AG04450 (cell line): ENCODE measurements at regions of chr2 and their contacts with region 1.

Region 1: GRCh38 chr2:223970343-223971128 is 13.3 kb downstream of the MRPL44 start:
- DNase-seq: no peak
- H3K4me3 ChIP-seq: no peak overlapping the region
- H3K27ac ChIP-seq: no peak overlapping the region
- H3K27me3 ChIP-seq: no peaks in the 10 kb centered on the region
- CTCF ChIP-seq: peak; percentile 93

Region 2: DNA sequence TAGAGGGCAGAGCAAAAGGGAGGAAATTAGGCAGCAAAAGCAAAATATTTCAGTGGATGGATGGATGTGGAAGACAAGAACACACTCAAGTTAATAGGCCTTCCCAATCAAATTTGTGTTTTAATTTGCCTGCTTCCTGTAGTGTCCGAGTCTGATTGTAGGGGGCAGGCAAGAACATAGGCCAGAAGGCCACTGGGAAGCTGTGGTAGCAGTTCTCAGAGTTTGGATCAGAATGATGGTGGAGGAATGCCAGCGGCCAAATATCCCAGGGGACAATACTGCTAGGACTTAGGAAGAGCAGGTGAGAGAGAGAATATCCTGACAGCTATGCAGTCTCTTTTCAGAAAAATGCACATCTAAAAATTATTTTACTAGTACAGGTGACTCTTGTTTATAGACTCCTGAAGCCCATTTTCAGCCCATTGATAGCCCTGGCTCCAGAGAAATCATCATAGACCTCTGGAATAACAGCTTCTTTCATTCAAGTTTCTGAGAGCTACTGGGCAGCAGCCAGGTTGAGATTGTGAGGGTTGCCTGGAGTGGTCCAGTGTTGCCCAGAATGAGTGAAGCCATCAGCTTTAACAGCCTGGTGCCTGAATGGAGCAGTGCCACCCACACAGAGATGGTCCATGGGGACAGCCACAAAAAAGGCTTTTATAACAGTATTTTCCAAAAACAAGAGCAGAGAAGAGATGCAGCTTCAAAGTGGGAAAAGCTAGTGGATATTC is 87.7 kb after region 1 on chr2:
- CTCF ChIA-PET with region 1: no interaction called
- POLR2A ChIA-PET with region 1: no interaction called
- DNase-seq: no peak
- H3K4me3 ChIP-seq: no peak overlapping the region
- H3K27ac ChIP-seq: no peak overlapping the region
- H3K27me3 ChIP-seq: no peaks in the 10 kb centered on the region
- CTCF ChIP-seq: no peak; the same call in 1 of the 2 replicates

Region 3: DNA sequence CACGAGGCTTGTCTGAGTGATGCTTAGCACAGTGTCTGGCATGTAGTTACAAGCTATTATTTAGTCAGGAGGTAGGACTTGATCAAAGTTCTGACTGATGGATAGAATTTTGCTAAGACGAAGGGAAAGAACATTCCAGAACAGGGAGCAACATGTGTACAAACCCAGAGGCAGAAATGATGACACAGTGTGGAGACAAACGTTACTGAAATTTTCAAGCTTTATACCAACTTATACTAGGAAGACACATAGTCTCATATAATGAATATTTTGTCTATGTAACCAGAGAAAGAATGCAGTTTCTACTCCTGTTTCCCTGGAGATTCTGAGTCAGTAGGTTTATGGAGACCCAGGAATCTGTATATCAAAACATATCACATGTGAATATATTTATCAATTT is 308.0 kb after region 1 on chr2:
- CTCF ChIA-PET with region 1: interaction called, 309 read pairs
- POLR2A ChIA-PET with region 1: no interaction called
- DNase-seq: no peak
- H3K4me3 ChIP-seq: no peak overlapping the region
- H3K27ac ChIP-seq: no peak overlapping the region
- H3K27me3 ChIP-seq: no peaks in the 10 kb centered on the region
- CTCF ChIP-seq: no peak

Region 4: DNA sequence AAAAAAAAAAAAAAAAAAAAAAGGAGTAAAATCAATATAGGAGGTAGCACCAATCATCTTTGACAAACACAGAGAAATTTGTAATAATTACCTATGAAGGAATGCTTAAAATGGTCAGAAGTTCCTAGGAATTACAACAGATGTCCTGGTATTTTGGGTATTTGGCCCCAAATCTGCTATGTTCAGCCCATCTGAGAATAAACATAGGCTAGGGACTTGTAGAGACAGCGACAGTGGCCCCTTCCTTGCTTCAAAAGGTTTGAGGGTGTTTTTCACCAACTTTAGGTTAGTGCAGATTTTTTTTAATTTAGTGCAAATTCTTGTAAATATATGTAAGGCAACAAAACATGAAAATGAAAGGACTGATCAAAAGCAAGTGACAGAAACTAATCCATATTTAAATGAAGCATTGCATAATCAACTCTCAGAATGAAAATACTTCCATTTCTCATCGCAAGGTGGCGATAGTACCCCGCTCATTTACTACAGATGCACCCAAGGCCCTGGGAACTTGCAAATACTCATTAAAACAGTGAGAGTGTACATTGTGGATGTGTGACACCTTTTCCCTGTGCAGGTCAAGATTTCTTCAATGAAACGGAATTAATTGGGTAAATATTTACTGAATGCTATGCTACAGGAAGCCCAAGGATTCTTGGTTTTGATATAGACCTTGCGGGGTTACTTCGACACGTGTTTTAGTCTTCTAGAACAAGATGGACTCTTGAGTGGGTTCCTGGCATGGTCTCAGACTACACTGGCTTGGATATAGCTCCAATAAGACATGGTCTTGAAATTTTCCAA is 386.8 kb after region 1 on chr2:
- CTCF ChIA-PET with region 1: interaction called, 34 read pairs
- POLR2A ChIA-PET with region 1: no interaction called
- DNase-seq: peak; percentile 30
- H3K4me3 ChIP-seq: no peak overlapping the region
- H3K27ac ChIP-seq: no peak overlapping the region
- H3K27me3 ChIP-seq: peaks cover 2% of the 10 kb centered on the region
- CTCF ChIP-seq: peak; percentile 74

Region 5: GRCh38 chr2:224449212-224450147 is 478.9 kb after region 1 on chr2:
- CTCF ChIA-PET with region 1: interaction called, 18 read pairs
- POLR2A ChIA-PET with region 1: no interaction called
- DNase-seq: no peak
- H3K4me3 ChIP-seq: no peak overlapping the region
- H3K27ac ChIP-seq: no peak overlapping the region
- H3K27me3 ChIP-seq: no peaks in the 10 kb centered on the region
- CTCF ChIP-seq: peak; percentile 69